Activated CD4-positive, alpha-beta T cell treated with anti-CD3 and anti-CD28 coated beads for 36 hours (primary cell): ENCODE measurements at regions of chr2 and their contacts with region 1.

Region 1: DNA sequence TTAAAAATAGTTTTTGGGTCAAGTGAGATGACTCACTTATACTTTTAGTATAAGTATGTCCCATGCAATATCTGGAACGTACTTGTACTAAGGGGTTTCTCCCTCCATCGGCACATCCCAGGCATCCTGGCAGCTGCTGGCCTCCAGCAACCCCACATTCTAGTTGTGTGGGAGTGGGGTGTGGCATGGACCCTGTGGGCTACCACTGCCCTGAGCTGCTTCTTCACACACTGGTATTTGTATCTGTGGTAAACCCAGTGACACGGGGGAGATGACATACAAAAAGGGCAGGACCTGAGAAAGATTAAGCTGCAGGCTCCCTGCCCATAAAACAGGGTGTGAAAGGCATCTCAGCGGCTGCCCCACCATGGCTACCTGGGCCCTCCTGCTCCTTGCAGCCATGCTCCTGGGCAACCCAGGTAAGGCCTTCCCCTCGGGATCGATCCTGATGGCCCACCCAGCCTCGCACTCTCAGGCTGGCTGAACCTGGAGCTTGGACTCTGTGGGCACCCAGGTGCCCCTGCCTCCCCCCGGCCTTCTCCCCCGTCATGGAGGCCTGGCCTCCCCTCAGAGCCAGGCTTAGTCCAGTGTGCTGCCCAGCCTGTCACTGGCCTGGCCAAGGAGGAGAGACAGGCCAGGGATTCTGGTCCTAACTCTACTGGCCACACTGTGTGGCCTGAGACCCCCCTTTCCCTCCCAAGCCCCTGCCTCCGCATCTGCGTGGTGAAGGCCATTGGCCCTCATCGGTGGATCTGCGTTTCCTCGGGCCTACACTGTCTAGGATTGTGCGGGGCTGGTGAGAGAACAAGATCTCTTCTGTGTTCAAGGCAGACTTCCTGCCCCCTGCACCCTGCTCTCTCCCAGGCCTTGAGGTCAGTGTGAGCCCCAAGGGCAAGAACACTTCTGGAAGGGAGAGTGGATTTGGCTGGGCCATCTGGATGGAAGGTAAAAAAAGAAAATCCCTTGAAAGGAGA is at the start of gene GNLY:
- DNase-seq: no peak
- ATAC-seq: no peak
- H3K4me3 Mint-ChIP-seq: no peak within 1 kb of the TSS
- H3K27ac Mint-ChIP-seq: no peak within 1 kb of the TSS
- H3K4me1 Mint-ChIP-seq: no peaks in the 10 kb centered on the region
- H3K27me3 Mint-ChIP-seq: no peaks in the 10 kb centered on the region
- total RNA-seq, gene GNLY: 18.9 to 21.6 TPM

Region 2: GRCh38 chr2:85678794-85679672 is 15.3 kb before region 1 on chr2:
- CTCF ChIA-PET with region 1: interaction called, 16 read pairs
- POLR2A ChIA-PET with region 1: no interaction called
- intact Hi-C with region 1: no loop called
- DNase-seq: peak; percentile 85
- ATAC-seq: peak; percentile 96
- H3K4me3 Mint-ChIP-seq: no peak overlapping the region
- H3K27ac Mint-ChIP-seq: no peak overlapping the region
- H3K4me1 Mint-ChIP-seq: no peaks in the 10 kb centered on the region
- H3K27me3 Mint-ChIP-seq: peaks cover 2% of the 10 kb centered on the region

Region 3: DNA sequence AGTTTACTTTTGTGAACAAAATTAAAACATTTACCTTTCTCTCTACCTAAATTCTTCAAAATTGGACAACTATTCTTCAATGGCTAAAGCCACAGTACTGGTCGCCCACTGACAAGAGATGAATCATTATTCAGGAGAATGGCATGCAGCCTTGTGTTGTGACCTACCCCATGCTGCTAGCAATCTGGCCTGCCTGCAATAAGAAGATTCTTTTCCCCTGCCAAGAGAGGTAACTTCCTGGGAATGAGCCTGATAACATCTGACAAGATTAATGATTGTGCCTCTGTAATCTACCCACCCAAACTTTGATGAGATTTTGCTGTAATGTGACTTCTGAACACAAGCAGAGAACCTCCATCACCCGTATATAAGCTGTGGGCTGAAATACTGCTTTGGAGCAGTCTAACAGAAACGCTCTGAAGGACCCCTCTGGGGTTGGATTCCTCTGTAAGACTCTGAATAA is 241.4 kb after region 1 on chr2:
- CTCF ChIA-PET with region 1: no interaction called
- POLR2A ChIA-PET with region 1: no interaction called
- intact Hi-C with region 1: no loop called
- DNase-seq: no peak
- ATAC-seq: no peak
- H3K4me3 Mint-ChIP-seq: no peak overlapping the region
- H3K27ac Mint-ChIP-seq: no peak overlapping the region
- H3K4me1 Mint-ChIP-seq: peaks cover 19% of the 10 kb centered on the region
- H3K27me3 Mint-ChIP-seq: peaks cover 2% of the 10 kb centered on the region